Activated CD4-positive, alpha-beta memory T cell treated with anti-CD3 and anti-CD28 coated beads, Interleukin-2, amount 10 ng/mL, durations not matched to agents 7 days and 5 days (primary cell): ENCODE measurements at regions of chr13 and their contacts with region 1.

Region 1: GRCh38 chr13:51814825-51815650 is 11.1 kb upstream of the DHRS12 start:
- DNase-seq: peak; percentile 82
- H3K4me3 Mint-ChIP-seq: peak overlapping the region; percentile 45
- H3K27ac Mint-ChIP-seq: peak overlapping the region; percentile 54
- H3K4me1 Mint-ChIP-seq: peaks cover 45% of the 10 kb centered on the region
- H3K27me3 Mint-ChIP-seq: no peaks in the 10 kb centered on the region

Region 2: GRCh38 chr13:51778392-51778791 is 36.6 kb before region 1 on chr13:
- CTCF ChIA-PET with region 1: no interaction called
- POLR2A ChIA-PET with region 1: no interaction called
- DNase-seq: no peak
- H3K4me3 Mint-ChIP-seq: no peak overlapping the region
- H3K27ac Mint-ChIP-seq: no peak overlapping the region
- H3K4me1 Mint-ChIP-seq: no peaks in the 10 kb centered on the region
- H3K27me3 Mint-ChIP-seq: no peaks in the 10 kb centered on the region

Region 3: DNA sequence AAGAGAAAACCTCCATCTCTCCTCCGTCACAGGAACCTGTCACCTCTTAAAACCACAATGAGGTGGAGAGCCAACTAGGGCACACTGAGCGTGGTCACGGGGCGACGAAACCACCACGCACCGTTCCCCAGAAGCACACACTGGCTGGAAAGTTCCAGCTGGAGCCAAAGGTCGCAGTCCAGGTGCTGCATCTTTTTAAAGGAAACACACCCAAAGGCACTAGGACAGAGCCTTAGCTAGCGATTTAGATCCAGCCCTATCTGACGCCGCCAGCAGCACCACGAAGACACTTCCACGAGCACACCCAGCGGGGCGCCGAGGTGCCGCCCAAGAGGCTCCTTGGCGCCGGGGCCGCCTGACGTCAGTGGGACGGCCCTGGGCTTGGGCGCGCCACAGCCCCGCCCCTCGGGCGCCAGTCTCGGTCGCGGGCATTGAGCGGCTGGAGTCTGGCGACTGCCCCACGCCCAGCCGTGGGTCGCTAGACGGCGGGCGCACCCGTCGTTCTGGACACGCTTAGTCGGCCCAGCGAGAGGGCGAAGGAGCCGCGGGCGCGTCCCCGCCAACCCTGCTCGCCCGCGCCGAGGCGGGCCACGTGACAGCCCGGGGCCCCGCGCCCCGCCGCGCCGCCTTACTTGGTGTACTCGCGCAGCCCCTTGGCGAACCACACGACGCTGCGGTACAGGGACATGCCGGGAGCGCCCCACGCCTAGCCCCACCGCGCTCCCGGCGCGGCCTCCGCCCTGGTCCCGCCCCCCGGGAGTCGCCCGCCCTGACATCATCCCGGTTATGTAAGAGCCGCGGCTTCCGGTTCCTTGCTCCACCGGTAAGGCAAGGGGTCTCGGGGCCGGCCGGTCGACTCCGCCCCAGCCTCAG is 11.4 kb before region 1 on chr13 and contains the start of gene DHRS12:
- CTCF ChIA-PET with region 1: interaction called, 19 read pairs
- POLR2A ChIA-PET with region 1: interaction called, 11 read pairs
- DNase-seq: peak; percentile 88
- H3K4me3 Mint-ChIP-seq: peak within 1 kb of the TSS; percentile 93
- H3K27ac Mint-ChIP-seq: peak within 1 kb of the TSS; percentile 99
- H3K4me1 Mint-ChIP-seq: peaks cover 36% of the 10 kb centered on the region
- H3K27me3 Mint-ChIP-seq: no peaks in the 10 kb centered on the region
- total RNA-seq, gene DHRS12: 5.0 to 6.4 TPM

Region 4: DNA sequence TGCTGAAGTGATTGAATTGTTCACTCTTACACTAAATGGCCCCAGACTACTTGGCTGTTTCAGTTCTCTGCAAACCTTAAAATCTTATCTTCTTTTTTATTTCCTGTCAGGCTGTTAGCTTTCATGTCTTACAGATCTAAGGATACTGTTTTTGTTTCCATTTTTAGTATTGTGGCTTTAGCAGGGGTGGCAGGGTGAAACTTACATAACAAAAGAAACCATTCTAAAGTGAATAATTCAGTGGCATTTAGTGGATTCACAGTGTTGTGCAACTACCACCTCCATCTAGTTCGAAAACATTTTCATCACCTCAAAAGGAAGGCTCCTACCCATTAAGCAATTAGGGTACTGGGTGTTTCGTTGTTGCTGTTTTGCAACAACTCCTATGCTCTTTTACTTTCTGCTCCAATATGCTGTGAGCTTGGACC is 10.1 kb after region 1 on chr13:
- CTCF ChIA-PET with region 1: interaction called, 40 read pairs
- POLR2A ChIA-PET with region 1: interaction called, 5 read pairs
- DNase-seq: no peak
- H3K4me3 Mint-ChIP-seq: peak overlapping the region; percentile 36
- H3K27ac Mint-ChIP-seq: peak overlapping the region; percentile 73
- H3K4me1 Mint-ChIP-seq: peaks cover 74% of the 10 kb centered on the region
- H3K27me3 Mint-ChIP-seq: no peaks in the 10 kb centered on the region

Region 5: DNA sequence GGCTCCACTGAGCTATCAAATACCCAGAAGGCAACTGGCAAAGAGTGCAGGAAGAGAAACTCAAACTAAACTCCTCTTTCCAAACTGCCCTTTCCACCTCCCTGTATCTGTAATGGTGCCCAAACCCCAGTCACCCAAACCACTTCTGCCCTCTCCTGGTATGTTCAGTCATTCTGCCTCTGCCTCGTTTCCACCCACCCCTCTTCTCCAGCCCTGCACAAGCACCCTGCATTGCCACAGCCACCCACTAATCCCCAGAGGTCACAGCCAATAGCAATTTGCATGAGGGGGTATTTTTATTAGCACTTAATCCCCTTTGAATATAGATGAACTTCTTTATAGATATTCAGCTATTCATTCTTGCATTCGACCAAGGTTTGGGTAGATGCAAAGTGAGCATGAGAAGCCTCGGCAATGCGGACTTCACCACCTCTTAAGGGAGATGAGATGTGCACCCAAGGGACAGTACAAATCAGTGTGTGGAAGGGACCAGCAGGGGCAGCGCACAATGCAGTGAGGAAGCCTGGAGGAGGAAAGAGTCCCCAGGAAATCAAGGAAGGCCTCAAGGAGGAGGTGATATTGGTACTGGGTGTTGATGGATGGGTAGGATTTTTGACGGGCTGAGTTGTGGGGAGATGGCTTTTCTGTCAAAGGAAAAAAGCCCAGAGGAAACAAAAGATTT is 17.6 kb after region 1 on chr13:
- CTCF ChIA-PET with region 1: interaction called, 101 read pairs
- POLR2A ChIA-PET with region 1: interaction called, 10 read pairs
- DNase-seq: peak; percentile 57
- H3K4me3 Mint-ChIP-seq: no peak overlapping the region
- H3K27ac Mint-ChIP-seq: no peak overlapping the region
- H3K4me1 Mint-ChIP-seq: peaks cover 22% of the 10 kb centered on the region
- H3K27me3 Mint-ChIP-seq: peaks cover 8% of the 10 kb centered on the region

Region 6: GRCh38 chr13:51844862-51845573 is 30.0 kb after region 1 on chr13 and contains the start of gene TMEM272:
- CTCF ChIA-PET with region 1: interaction called, 18 read pairs
- POLR2A ChIA-PET with region 1: no interaction called
- DNase-seq: peak; percentile 49
- H3K4me3 Mint-ChIP-seq: no peak within 1 kb of the TSS
- H3K27ac Mint-ChIP-seq: no peak within 1 kb of the TSS
- H3K4me1 Mint-ChIP-seq: peaks cover 8% of the 10 kb centered on the region
- H3K27me3 Mint-ChIP-seq: peaks cover 16% of the 10 kb centered on the region
- total RNA-seq, gene TMEM272: 0.15 to 0.28 TPM

Region 7: DNA sequence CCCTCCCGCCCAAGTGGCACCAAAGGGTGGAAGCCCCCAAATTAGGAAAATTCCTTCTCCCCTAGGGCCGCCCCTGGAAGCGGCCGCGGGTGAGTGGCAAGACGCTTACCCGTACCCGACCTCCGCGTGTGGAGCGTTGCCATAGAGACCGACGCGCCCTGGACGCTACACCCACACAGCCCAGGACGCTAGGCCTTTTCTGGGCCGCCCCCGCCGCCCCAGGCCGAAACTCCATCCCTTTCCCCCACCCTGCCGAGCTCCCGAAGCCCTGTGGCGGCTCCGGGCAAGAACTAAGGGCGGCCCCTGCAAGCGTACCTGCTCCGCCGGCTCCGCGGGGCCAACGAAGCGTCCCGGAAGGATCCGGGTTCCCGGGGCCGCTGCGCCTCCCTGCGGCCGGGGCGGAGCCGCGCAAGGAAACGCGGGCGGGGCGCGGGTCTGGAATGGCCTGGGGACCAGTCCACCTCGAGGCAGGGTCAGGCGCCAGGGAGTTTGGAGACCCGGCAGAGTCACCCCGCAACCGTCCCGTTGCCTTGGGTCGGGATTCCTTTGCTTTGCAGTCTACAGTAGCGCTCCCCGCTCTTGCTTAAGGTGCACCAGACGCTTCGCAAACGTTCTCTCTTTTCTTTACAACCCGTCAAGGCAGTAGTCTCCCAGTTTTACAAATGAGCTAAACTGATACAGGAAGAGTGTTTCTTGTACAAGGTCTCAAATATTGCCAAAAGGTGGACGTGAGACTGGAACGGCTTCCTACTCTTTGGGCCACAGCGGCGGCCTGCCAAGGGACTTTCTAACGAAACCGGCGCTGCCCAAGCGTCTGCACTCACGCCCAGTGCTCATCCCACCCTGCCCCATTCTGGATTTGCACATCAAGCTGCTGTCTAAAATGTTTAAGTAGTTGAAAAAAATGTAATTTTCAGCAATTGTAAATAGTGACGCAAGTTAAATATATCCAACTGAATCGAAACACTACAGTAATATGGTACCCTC is 314.0 kb after region 1 on chr13 and contains the start of gene NEK5:
- CTCF ChIA-PET with region 1: interaction called, 45 read pairs
- POLR2A ChIA-PET with region 1: no interaction called
- DNase-seq: peak; percentile 66
- H3K4me3 Mint-ChIP-seq: peak within 1 kb of the TSS; percentile 66
- H3K27ac Mint-ChIP-seq: no peak within 1 kb of the TSS
- H3K4me1 Mint-ChIP-seq: peaks cover 15% of the 10 kb centered on the region
- H3K27me3 Mint-ChIP-seq: peaks cover 12% of the 10 kb centered on the region
- total RNA-seq, gene NEK5: not detected